GM10248 (cell line): ENCODE measurements at regions of chr19 and their contacts with region 1.

Region 1: GRCh38 chr19:35495107-35496064 is 5.1 kb upstream of the KRTDAP start:
- DNase-seq: peak; percentile 92
- CTCF ChIP-seq: peak; percentile 96

Region 2: GRCh38 chr19:35352448-35353304 is 142.7 kb before region 1 on chr19:
- CTCF ChIA-PET with region 1: interaction called, 94 read pairs
- POLR2A ChIA-PET with region 1: interaction called, 3 read pairs
- DNase-seq: peak; percentile 82
- CTCF ChIP-seq: peak; percentile 79

Region 3: GRCh38 chr19:35417713-35418534 is 77.5 kb before region 1 on chr19:
- CTCF ChIA-PET with region 1: interaction called, 10 read pairs
- POLR2A ChIA-PET with region 1: no interaction called
- DNase-seq: peak; percentile 67
- CTCF ChIP-seq: no peak

Region 4: GRCh38 chr19:35468637-35469036 is 26.7 kb before region 1 on chr19:
- CTCF ChIA-PET with region 1: interaction called, 14 read pairs
- POLR2A ChIA-PET with region 1: no interaction called
- DNase-seq: peak; percentile 84
- CTCF ChIP-seq: peak; percentile 78

Region 5: GRCh38 chr19:35484252-35485036 is 10.9 kb before region 1 on chr19:
- CTCF ChIA-PET with region 1: interaction called, 63 read pairs
- POLR2A ChIA-PET with region 1: no interaction called
- DNase-seq: peak; percentile 81
- CTCF ChIP-seq: no peak

Region 6: DNA sequence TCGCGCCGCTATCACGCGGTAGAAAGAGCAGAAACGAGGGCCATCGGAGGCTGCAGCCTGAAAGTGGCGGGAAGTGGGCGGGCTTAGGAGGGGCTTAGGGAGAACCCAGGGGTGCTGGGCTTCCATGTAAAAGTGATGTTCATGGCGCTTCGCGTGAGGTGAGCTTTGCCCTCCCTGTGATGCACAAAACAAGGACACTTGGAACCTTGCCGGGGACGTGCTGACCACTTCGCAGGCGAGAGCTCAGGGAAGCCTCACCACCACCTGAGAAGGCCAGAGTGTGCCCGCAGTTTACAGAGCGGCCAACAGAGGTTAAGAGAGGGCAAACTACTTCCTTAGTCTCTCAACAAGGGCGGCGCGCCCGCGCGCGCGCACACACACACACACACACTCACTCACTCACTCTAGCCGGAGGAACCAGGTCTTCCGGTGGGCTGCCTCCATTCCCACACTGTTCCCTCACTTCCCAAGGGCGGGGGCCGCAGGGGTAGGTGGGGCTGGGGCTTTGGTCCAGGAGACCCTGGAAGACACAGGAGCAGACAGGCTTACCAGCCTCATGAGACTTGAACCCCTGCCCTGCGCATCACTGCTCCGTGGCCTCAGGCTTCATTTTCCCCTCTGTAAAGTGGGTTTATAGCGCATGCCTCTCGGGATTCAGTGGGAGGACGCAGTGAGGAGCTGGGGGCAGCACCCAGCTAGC is 38.6 kb after region 1 on chr19:
- CTCF ChIA-PET with region 1: interaction called, 10 read pairs
- POLR2A ChIA-PET with region 1: no interaction called
- DNase-seq: peak; percentile 48
- CTCF ChIP-seq: no peak